CD4-positive, alpha-beta T cell (primary cell): ENCODE measurements at regions of chr9 and their contacts with region 1.

Region 1: GRCh38 chr9:121322037-121322775 is 47.8 kb downstream of the STOM start:
- DNase-seq: peak in 2 of 14 experiments; percentile 5 to 10
- ATAC-seq: no peak
- H3K4me3 ChIP-seq: no peak overlapping the region
- H3K4me3 Mint-ChIP-seq: no peak overlapping the region
- H3K27ac ChIP-seq: no peak overlapping the region
- H3K27ac Mint-ChIP-seq: no peak overlapping the region
- H3K4me1 ChIP-seq: peaks cover 25% of the 10 kb centered on the region
- H3K4me1 Mint-ChIP-seq: peaks cover 18% of the 10 kb centered on the region
- H3K27me3 ChIP-seq: no peaks in the 10 kb centered on the region
- H3K27me3 Mint-ChIP-seq: no peaks in the 10 kb centered on the region
- CTCF ChIP-seq: no peak

Region 2: DNA sequence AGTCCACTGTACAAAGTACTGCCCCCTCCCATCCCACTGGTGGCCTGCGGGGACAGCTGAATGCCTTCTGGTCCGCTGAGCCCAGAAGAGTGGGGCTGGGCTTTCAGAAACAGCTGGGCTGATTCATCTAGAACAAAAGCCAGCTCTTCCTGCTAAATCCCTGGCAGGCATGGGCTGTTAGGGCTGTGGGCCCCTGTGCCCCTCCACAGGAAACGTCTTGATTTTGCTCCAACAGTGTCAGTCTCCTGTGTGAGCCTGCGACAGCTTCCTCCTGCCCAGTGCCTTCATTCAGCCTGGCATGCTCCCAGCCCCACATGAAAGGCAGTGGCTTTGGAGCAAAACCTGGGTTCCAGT is 61.1 kb before region 1 on chr9:
- CTCF ChIA-PET with region 1: no interaction called
- POLR2A ChIA-PET with region 1: no interaction called
- intact Hi-C with region 1: no loop called
- DNase-seq: no peak
- ATAC-seq: no peak
- H3K4me3 ChIP-seq: no peak overlapping the region
- H3K4me3 Mint-ChIP-seq: no peak overlapping the region
- H3K27ac ChIP-seq: no peak overlapping the region
- H3K27ac Mint-ChIP-seq: no peak overlapping the region
- H3K4me1 ChIP-seq: no peaks in the 10 kb centered on the region
- H3K4me1 Mint-ChIP-seq: no peaks in the 10 kb centered on the region
- H3K27me3 ChIP-seq: no peaks in the 10 kb centered on the region
- H3K27me3 Mint-ChIP-seq: peaks cover 11% of the 10 kb centered on the region
- CTCF ChIP-seq: no peak

Region 3: GRCh38 chr9:121339437-121339836 is 17.2 kb after region 1 on chr9:
- CTCF ChIA-PET with region 1: interaction called, 10 read pairs
- POLR2A ChIA-PET with region 1: no interaction called
- intact Hi-C with region 1: no loop called
- DNase-seq: no peak
- ATAC-seq: no peak
- H3K4me3 ChIP-seq: no peak overlapping the region
- H3K4me3 Mint-ChIP-seq: no peak overlapping the region
- H3K27ac ChIP-seq: no peak overlapping the region
- H3K27ac Mint-ChIP-seq: no peak overlapping the region
- H3K4me1 ChIP-seq: peaks cover 4% of the 10 kb centered on the region
- H3K4me1 Mint-ChIP-seq: no peaks in the 10 kb centered on the region
- H3K27me3 ChIP-seq: no peaks in the 10 kb centered on the region
- H3K27me3 Mint-ChIP-seq: no peaks in the 10 kb centered on the region
- CTCF ChIP-seq: no peak

Region 4: GRCh38 chr9:121362813-121363621 is 40.8 kb after region 1 on chr9:
- CTCF ChIA-PET with region 1: interaction called, 16 read pairs
- POLR2A ChIA-PET with region 1: no interaction called
- intact Hi-C with region 1: no loop called
- DNase-seq: no peak
- ATAC-seq: no peak
- H3K4me3 ChIP-seq: no peak overlapping the region
- H3K4me3 Mint-ChIP-seq: no peak overlapping the region
- H3K27ac ChIP-seq: no peak overlapping the region
- H3K27ac Mint-ChIP-seq: no peak overlapping the region
- H3K4me1 ChIP-seq: peaks cover 12% of the 10 kb centered on the region
- H3K4me1 Mint-ChIP-seq: peaks cover 70% of the 10 kb centered on the region
- H3K27me3 ChIP-seq: no peaks in the 10 kb centered on the region
- H3K27me3 Mint-ChIP-seq: no peaks in the 10 kb centered on the region
- CTCF ChIP-seq: no peak

Region 5: GRCh38 chr9:121376214-121376830 is 54.1 kb after region 1 on chr9:
- CTCF ChIA-PET with region 1: interaction called, 30 read pairs
- POLR2A ChIA-PET with region 1: interaction called, 7 read pairs
- intact Hi-C with region 1: loop called (anchors 1 kb)
- DNase-seq: peak in 3 of 14 experiments; percentile 39 to 44 (median 44)
- ATAC-seq: no peak
- H3K4me3 ChIP-seq: no peak overlapping the region
- H3K4me3 Mint-ChIP-seq: no peak overlapping the region
- H3K27ac ChIP-seq: no peak overlapping the region
- H3K27ac Mint-ChIP-seq: no peak overlapping the region
- H3K4me1 ChIP-seq: no peaks in the 10 kb centered on the region
- H3K4me1 Mint-ChIP-seq: peaks cover 20% of the 10 kb centered on the region
- H3K27me3 ChIP-seq: no peaks in the 10 kb centered on the region
- H3K27me3 Mint-ChIP-seq: no peaks in the 10 kb centered on the region
- CTCF ChIP-seq: peak; percentile 44

Region 6: GRCh38 chr9:121393318-121393717 is 71.1 kb after region 1 on chr9:
- CTCF ChIA-PET with region 1: interaction called, 118 read pairs
- POLR2A ChIA-PET with region 1: no interaction called
- intact Hi-C with region 1: no loop called
- DNase-seq: peak in 1 of 14 experiments; percentile 14
- ATAC-seq: no peak
- H3K4me3 ChIP-seq: no peak overlapping the region
- H3K4me3 Mint-ChIP-seq: no peak overlapping the region
- H3K27ac ChIP-seq: no peak overlapping the region
- H3K27ac Mint-ChIP-seq: no peak overlapping the region
- H3K4me1 ChIP-seq: peaks cover 6% of the 10 kb centered on the region
- H3K4me1 Mint-ChIP-seq: peaks cover 6% of the 10 kb centered on the region
- H3K27me3 ChIP-seq: no peaks in the 10 kb centered on the region
- H3K27me3 Mint-ChIP-seq: no peaks in the 10 kb centered on the region
- CTCF ChIP-seq: no peak

Region 7: GRCh38 chr9:121405899-121406298 is 83.7 kb after region 1 on chr9:
- CTCF ChIA-PET with region 1: interaction called, 118 read pairs
- POLR2A ChIA-PET with region 1: no interaction called
- intact Hi-C with region 1: no loop called
- DNase-seq: no peak
- ATAC-seq: no peak
- H3K4me3 ChIP-seq: no peak overlapping the region
- H3K4me3 Mint-ChIP-seq: no peak overlapping the region
- H3K27ac ChIP-seq: no peak overlapping the region
- H3K27ac Mint-ChIP-seq: no peak overlapping the region
- H3K4me1 ChIP-seq: no peaks in the 10 kb centered on the region
- H3K4me1 Mint-ChIP-seq: no peaks in the 10 kb centered on the region
- H3K27me3 ChIP-seq: no peaks in the 10 kb centered on the region
- H3K27me3 Mint-ChIP-seq: no peaks in the 10 kb centered on the region
- CTCF ChIP-seq: no peak

Region 8: DNA sequence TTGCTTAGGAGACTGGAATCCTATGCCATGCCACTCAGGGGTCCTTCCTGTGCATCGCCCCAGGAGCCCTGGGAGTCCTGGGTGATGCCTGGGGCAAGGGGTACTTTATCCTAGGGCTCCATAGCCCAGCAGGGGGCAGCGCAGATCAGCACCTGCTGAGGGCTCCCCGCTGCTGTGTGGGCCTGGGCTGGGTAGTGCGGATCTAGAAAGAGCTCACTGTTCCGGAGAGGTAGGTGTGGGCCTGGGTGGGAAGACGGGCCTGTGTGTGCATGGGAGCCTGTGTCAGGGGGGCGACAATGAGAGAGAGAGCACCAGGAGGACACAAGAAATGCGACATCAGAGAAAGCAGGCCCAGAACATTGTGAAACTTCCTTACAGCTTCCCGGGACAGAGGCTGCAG is 317.9 kb after region 1 on chr9:
- CTCF ChIA-PET with region 1: no interaction called
- POLR2A ChIA-PET with region 1: no interaction called
- intact Hi-C with region 1: no loop called
- DNase-seq: peak in 4 of 14 experiments; percentile 6 to 28 (median 14)
- ATAC-seq: no peak
- H3K4me3 ChIP-seq: no peak overlapping the region
- H3K4me3 Mint-ChIP-seq: no peak overlapping the region
- H3K27ac ChIP-seq: no peak overlapping the region
- H3K27ac Mint-ChIP-seq: no peak overlapping the region
- H3K4me1 ChIP-seq: no peaks in the 10 kb centered on the region
- H3K4me1 Mint-ChIP-seq: no peaks in the 10 kb centered on the region
- H3K27me3 ChIP-seq: no peaks in the 10 kb centered on the region
- H3K27me3 Mint-ChIP-seq: no peaks in the 10 kb centered on the region
- CTCF ChIP-seq: no peak

Region 9: GRCh38 chr9:121798941-121799340 is 476.7 kb after region 1 on chr9:
- CTCF ChIA-PET with region 1: no interaction called
- POLR2A ChIA-PET with region 1: no interaction called
- intact Hi-C with region 1: no loop called
- DNase-seq: no peak
- ATAC-seq: no peak
- H3K4me3 ChIP-seq: no peak overlapping the region
- H3K4me3 Mint-ChIP-seq: no peak overlapping the region
- H3K27ac ChIP-seq: no peak overlapping the region
- H3K27ac Mint-ChIP-seq: no peak overlapping the region
- H3K4me1 ChIP-seq: no peaks in the 10 kb centered on the region
- H3K4me1 Mint-ChIP-seq: no peaks in the 10 kb centered on the region
- H3K27me3 ChIP-seq: peaks cover 0 to 5% of the 10 kb centered on the region in 2 experiments
- H3K27me3 Mint-ChIP-seq: peaks cover 7% of the 10 kb centered on the region
- CTCF ChIP-seq: no peak